ENCODE measurements at regions of chr20 and their contacts with region 1.

Region 1: GRCh38 chr20:48657475-48658470 is 170.0 kb downstream of the PREX1 start:
- DNase-seq: peak; percentile 74
- H3K4me3 Mint-ChIP-seq: no peak overlapping the region
- H3K27ac Mint-ChIP-seq: peak overlapping the region; percentile 57
- H3K4me1 Mint-ChIP-seq: peaks cover 1% of the 10 kb centered on the region
- H3K27me3 Mint-ChIP-seq: no peaks in the 10 kb centered on the region

Region 2: DNA sequence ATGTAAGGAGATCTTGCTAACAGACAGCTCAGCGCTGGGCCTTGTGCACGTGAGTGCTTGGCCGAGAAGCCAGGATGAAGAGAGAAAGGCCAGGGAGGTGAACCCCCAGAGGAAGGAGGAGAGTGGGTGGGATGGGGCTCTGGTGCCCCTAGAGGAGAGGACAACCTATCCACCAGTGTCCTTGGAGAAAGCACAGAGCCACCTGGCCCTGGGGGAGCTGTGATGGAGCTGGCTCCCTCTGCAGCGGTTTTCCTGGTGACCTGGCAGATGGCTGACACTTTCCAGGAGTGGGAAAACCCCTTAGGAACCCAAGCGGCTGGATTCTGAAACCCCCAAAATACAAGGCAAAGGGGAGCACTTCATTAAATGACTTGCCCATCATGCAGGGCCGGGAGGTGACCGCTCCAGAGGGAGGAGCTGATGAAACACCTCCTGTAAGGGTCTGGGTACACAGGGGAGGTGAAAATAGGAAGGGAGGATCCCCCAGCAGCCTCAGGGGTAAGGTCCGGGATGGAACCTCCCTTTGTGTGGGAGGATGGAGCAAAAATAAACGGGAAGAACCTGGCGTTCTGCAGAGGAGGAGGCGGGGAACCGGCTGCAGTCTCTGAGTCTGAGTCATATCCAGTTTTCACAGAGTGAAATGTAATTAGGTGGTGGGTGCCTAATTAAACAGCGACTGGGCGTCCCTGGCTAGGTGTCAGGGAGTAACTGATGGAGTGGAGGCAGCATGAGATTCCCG is 952.8 kb before region 1 on chr20:
- CTCF ChIA-PET with region 1: no interaction called
- POLR2A ChIA-PET with region 1: no interaction called
- intact Hi-C with region 1: no loop called
- DNase-seq: no peak
- H3K4me3 Mint-ChIP-seq: no peak overlapping the region
- H3K27ac Mint-ChIP-seq: no peak overlapping the region
- H3K4me1 Mint-ChIP-seq: no peaks in the 10 kb centered on the region
- H3K27me3 Mint-ChIP-seq: peaks cover 9% of the 10 kb centered on the region

Region 3: GRCh38 chr20:48635433-48636310 is 22.1 kb before region 1 on chr20:
- CTCF ChIA-PET with region 1: interaction called, 26 read pairs
- POLR2A ChIA-PET with region 1: no interaction called
- intact Hi-C with region 1: no loop called
- DNase-seq: peak; percentile 83
- H3K4me3 Mint-ChIP-seq: no peak overlapping the region
- H3K27ac Mint-ChIP-seq: peak overlapping the region; percentile 74
- H3K4me1 Mint-ChIP-seq: peaks cover 5% of the 10 kb centered on the region
- H3K27me3 Mint-ChIP-seq: no peaks in the 10 kb centered on the region

Region 4: GRCh38 chr20:48738399-48739304 is 80.9 kb after region 1 on chr20:
- CTCF ChIA-PET with region 1: interaction called, 10 read pairs
- POLR2A ChIA-PET with region 1: interaction called, 3 read pairs
- intact Hi-C with region 1: no loop called
- DNase-seq: peak; percentile 91
- H3K4me3 Mint-ChIP-seq: peak overlapping the region; percentile 38
- H3K27ac Mint-ChIP-seq: peak overlapping the region; percentile 92
- H3K4me1 Mint-ChIP-seq: peaks cover 56% of the 10 kb centered on the region
- H3K27me3 Mint-ChIP-seq: no peaks in the 10 kb centered on the region

Region 5: GRCh38 chr20:48892844-48893243 is 235.1 kb after region 1 on chr20:
- CTCF ChIA-PET with region 1: interaction called, 12 read pairs
- POLR2A ChIA-PET with region 1: no interaction called
- intact Hi-C with region 1: no loop called
- DNase-seq: no peak
- H3K4me3 Mint-ChIP-seq: no peak overlapping the region
- H3K27ac Mint-ChIP-seq: no peak overlapping the region
- H3K4me1 Mint-ChIP-seq: no peaks in the 10 kb centered on the region
- H3K27me3 Mint-ChIP-seq: no peaks in the 10 kb centered on the region

Region 6: GRCh38 chr20:48921151-48921898 is 263.6 kb after region 1 on chr20 and contains the start of gene ARFGEF2:
- CTCF ChIA-PET with region 1: interaction called, 11 read pairs
- POLR2A ChIA-PET with region 1: no interaction called
- intact Hi-C with region 1: no loop called
- DNase-seq: peak; percentile 96
- H3K4me3 Mint-ChIP-seq: peak within 1 kb of the TSS; percentile 91
- H3K27ac Mint-ChIP-seq: peak within 1 kb of the TSS; percentile 90
- H3K4me1 Mint-ChIP-seq: peaks cover 47% of the 10 kb centered on the region
- H3K27me3 Mint-ChIP-seq: no peaks in the 10 kb centered on the region
- total RNA-seq, gene ARFGEF2: 21.9 to 22.1 TPM

Measured in activated CD4-positive, alpha-beta memory T cell treated with anti-CD3 and anti-CD28 coated beads for 36 hours (primary cell).